ENCODE measurements at regions of chr15 and their contacts with region 1.

Region 1: GRCh38 chr15:40274350-40275274 is 8.3 kb downstream of the ANKRD63 start:
- DNase-seq: peak; percentile 82
- H3K4me3 ChIP-seq: no peak overlapping the region
- H3K27ac ChIP-seq: no peak overlapping the region
- H3K4me1 ChIP-seq: no peaks in the 10 kb centered on the region
- H3K27me3 ChIP-seq: peaks cover 17 to 25% of the 10 kb centered on the region in 2 experiments
- CTCF ChIP-seq: peak; percentile 100
- POLR2A ChIP-seq: no peak

Region 2: DNA sequence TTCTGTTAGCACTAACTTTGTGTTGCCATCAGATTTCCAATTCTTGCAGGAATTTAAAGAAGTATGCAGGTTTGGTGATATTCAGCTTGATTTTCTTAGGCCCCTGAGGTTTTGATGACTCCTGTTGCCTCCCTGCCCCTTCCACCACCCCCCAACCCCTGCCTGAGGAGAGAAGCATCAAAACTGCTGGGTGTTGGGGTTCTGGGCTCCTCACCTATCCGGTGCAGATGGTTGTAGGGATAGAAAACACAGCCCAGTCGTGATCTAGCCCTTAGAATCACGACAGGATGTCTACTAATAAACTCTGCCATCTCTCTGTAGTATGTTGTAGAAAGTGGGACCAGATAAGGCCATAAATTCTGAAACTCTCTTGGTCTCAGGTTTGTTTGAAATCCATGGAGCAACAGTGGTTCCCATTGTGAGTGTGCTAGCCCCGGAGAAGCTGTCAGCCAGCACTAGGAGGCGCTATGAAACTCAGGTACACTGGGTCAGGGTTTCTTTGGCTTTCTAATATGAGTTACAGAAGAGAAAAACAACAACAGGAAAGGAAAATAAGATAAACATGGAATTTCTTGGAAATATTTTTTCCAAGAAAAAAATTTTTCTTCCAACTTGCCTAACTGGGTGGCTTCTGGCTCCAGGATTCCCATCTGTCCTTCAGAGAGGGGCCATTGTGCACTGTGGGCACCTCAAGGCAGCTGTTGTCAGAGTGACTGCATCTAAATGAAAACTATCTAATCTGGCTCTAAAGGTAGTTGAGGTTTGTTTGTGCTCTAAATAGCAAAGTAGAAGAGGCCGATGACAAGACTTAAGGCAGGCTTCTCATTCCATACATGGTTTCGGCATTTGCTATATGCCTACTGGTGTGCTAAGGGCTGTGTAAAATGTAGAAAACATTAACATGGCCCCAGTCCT is 244.4 kb before region 1 on chr15:
- CTCF ChIA-PET with region 1: interaction called, 62 read pairs
- POLR2A ChIA-PET with region 1: no interaction called
- dilution Hi-C with region 1: no loop called
- intact Hi-C with region 1: no loop called
- DNase-seq: peak; percentile 25
- H3K4me3 ChIP-seq: no peak overlapping the region
- H3K27ac ChIP-seq: peak overlapping the region; percentile 64
- H3K4me1 ChIP-seq: peaks cover 28% of the 10 kb centered on the region
- H3K27me3 ChIP-seq: no peaks in the 10 kb centered on the region
- CTCF ChIP-seq: peak; percentile 46 to 55
- POLR2A ChIP-seq: no peak

Region 3: GRCh38 chr15:40108855-40109735 is 165.5 kb before region 1 on chr15 and contains the start of gene BMF:
- CTCF ChIA-PET with region 1: interaction called, 31 read pairs
- POLR2A ChIA-PET with region 1: no interaction called
- dilution Hi-C with region 1: no loop called
- intact Hi-C with region 1: loop called (anchors 10 kb)
- DNase-seq: peak; percentile 99
- H3K4me3 ChIP-seq: peak within 1 kb of the TSS; percentile 61 to 79 (median 72)
- H3K27ac ChIP-seq: peak within 1 kb of the TSS; percentile 37
- H3K4me1 ChIP-seq: peaks cover 10% of the 10 kb centered on the region
- H3K27me3 ChIP-seq: peaks cover 4 to 19% of the 10 kb centered on the region in 2 experiments
- CTCF ChIP-seq: peak; percentile 35 to 48
- POLR2A ChIP-seq: no peak
- total RNA-seq, gene BMF: 9.8 and 13.9 TPM in 2 replicates

Region 4: GRCh38 chr15:40226736-40227135 is 47.9 kb before region 1 on chr15:
- CTCF ChIA-PET with region 1: interaction called, 879 read pairs
- POLR2A ChIA-PET with region 1: no interaction called
- dilution Hi-C with region 1: no loop called
- intact Hi-C with region 1: no loop called
- DNase-seq: no peak
- H3K4me3 ChIP-seq: no peak overlapping the region
- H3K27ac ChIP-seq: no peak overlapping the region
- H3K4me1 ChIP-seq: no peaks in the 10 kb centered on the region
- H3K27me3 ChIP-seq: no peaks in the 10 kb centered on the region
- CTCF ChIP-seq: no peak
- POLR2A ChIP-seq: no peak

Region 5: DNA sequence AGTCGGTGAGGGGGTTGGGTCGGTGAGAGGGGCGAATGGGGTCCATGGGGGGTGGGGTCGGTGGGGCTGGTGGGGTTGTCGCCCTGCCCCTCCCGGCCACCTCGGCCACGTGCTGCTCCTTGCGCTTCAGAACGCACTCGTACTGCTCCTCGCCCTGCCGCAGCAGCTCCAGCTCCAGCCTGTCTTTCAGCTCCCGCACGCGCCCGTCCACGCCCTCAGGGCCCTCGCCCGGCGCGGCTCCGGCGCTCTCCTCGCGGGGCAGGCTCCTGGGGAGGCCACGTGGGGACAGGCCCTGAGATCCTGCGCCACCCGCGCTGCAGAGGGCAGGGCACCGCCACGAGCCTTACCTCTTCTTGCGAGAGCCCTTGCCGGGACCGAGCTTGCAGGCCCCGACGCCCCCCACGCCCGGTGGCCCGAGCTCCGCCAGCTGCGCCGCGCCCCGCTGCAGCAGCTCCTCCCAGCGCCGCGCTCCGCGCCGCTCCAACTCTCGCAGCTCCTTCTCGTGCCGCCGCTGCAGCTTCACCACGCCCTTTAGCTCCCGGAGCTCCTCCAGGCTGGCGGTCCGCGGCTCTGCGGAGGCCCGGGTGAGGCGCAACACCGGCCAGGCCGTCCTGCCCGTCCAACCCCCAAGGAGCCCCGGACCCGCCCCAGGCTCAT is 16.4 kb after region 1 on chr15:
- CTCF ChIA-PET with region 1: interaction called, 77 read pairs
- POLR2A ChIA-PET with region 1: no interaction called
- dilution Hi-C with region 1: no loop called
- intact Hi-C with region 1: no loop called
- DNase-seq: peak; percentile 36
- H3K4me3 ChIP-seq: peak overlapping the region in 1 of 3 experiments; percentile 23
- H3K27ac ChIP-seq: no peak overlapping the region
- H3K4me1 ChIP-seq: no peaks in the 10 kb centered on the region
- H3K27me3 ChIP-seq: peaks cover 0 to 27% of the 10 kb centered on the region in 2 experiments
- CTCF ChIP-seq: no peak
- POLR2A ChIP-seq: no peak

Region 6: DNA sequence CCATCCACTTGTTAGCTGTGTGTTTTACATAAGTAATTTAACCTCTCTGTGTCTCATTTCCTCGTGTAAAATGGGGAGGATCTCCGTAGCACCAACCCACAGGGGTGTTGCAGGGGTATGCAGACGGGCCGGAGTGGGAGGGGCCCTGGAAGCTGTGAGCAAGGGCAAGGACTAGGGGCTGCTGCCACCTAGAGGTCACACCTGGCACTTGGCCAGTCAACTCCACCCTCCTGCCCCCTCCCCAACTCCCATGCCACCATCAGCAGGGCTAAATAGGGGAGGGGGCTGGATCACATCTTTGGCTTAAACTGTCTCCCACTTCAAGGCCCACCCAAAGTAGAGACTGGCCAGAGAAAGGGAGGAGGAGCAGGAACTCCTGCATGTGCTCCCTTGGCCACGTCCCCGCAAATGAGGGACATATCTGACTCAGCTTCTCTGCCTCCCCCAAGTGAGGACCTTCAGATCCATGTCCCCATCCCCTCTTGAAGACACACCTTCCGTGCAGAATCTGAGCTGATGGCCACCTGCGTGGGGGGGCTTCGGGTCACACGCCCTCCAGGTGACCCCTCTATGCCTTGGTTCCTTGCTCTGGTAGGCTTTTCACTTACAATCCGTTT is 63.5 kb after region 1 on chr15:
- CTCF ChIA-PET with region 1: interaction called, 192 read pairs
- POLR2A ChIA-PET with region 1: no interaction called
- dilution Hi-C with region 1: no loop called
- intact Hi-C with region 1: loop called (anchors 1 kb)
- DNase-seq: peak; percentile 75
- H3K4me3 ChIP-seq: no peak overlapping the region
- H3K27ac ChIP-seq: peak overlapping the region; percentile 94
- H3K4me1 ChIP-seq: peaks cover 68% of the 10 kb centered on the region
- H3K27me3 ChIP-seq: no peaks in the 10 kb centered on the region
- CTCF ChIP-seq: peak; percentile 75 to 90
- POLR2A ChIP-seq: no peak

Region 7: GRCh38 chr15:40421246-40422157 is 146.9 kb after region 1 on chr15:
- CTCF ChIA-PET with region 1: interaction called, 113 read pairs
- POLR2A ChIA-PET with region 1: no interaction called
- dilution Hi-C with region 1: no loop called
- intact Hi-C with region 1: loop called (anchors 1 kb)
- DNase-seq: peak; percentile 61
- H3K4me3 ChIP-seq: no peak overlapping the region
- H3K27ac ChIP-seq: no peak overlapping the region
- H3K4me1 ChIP-seq: no peaks in the 10 kb centered on the region
- H3K27me3 ChIP-seq: no peaks in the 10 kb centered on the region
- CTCF ChIP-seq: peak; percentile 89 to 99
- POLR2A ChIP-seq: peak; percentile 34